HepG2 (cell line): ENCODE measurements at regions of chr11 and their contacts with region 1.

Region 1: DNA sequence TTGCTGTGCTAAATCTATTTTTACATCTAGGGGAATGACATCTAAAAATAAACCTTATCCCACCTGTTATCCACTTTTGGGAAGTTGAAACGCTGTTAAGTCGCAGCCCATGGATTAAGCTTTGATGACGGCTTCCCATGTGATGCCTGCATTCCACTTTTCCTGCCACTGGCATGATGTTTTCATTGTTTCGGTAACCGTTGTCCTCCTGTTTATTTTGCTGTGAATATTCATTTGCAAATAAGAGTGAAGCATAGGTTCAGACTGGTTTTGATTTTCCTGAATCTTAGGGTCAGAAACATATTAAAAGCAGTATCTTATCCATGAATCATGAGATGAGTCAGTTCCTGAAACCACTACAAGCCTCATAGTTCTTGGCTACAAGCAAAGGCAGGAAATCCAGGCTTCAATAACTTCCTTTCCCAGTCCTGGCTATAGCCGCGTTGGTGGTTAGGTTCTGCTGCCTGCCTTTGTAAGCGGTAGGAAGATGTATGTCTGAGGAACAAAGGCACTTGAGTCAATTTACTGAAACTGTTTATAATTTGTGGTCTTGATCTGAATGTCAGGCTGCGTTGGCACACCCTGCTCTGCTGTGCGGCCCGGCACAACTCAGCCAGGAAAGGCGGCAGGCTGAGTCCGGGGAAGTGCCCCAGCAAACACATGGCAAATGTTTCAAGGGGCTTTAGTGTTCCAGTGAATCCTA is 19.4 kb downstream of the TEAD1 start:
- DNase-seq: peak; percentile 48
- ATAC-seq: peak; percentile 47
- H3K4me3 ChIP-seq: peak overlapping the region; percentile 2 to 55 (median 6); a peak in 3 of 6 replicates
- H3K27ac ChIP-seq: peak overlapping the region; percentile 94
- H3K4me1 ChIP-seq: peaks cover 78% of the 10 kb centered on the region
- H3K27me3 ChIP-seq: no peaks in the 10 kb centered on the region
- CTCF ChIP-seq: no peak
- EP300 ChIP-seq: no peak
- POLR2A ChIP-seq: no peak
- RAD21 ChIP-seq: no peak

Region 2: GRCh38 chr11:12478743-12479142 is 214.9 kb before region 1 on chr11:
- CTCF ChIA-PET with region 1: no interaction called
- POLR2A ChIA-PET with region 1: no interaction called
- in situ Hi-C with region 1: no loop called
- intact Hi-C with region 1: no loop called
- DNase-seq: peak; percentile 19
- ATAC-seq: no peak
- H3K4me3 ChIP-seq: no peak overlapping the region
- H3K27ac ChIP-seq: no peak overlapping the region
- H3K4me1 ChIP-seq: peaks cover 7% of the 10 kb centered on the region; the same call in 1 of the 2 replicates
- H3K27me3 ChIP-seq: no peaks in the 10 kb centered on the region
- CTCF ChIP-seq: no peak
- EP300 ChIP-seq: no peak
- POLR2A ChIP-seq: no peak
- RAD21 ChIP-seq: no peak

Region 3: DNA sequence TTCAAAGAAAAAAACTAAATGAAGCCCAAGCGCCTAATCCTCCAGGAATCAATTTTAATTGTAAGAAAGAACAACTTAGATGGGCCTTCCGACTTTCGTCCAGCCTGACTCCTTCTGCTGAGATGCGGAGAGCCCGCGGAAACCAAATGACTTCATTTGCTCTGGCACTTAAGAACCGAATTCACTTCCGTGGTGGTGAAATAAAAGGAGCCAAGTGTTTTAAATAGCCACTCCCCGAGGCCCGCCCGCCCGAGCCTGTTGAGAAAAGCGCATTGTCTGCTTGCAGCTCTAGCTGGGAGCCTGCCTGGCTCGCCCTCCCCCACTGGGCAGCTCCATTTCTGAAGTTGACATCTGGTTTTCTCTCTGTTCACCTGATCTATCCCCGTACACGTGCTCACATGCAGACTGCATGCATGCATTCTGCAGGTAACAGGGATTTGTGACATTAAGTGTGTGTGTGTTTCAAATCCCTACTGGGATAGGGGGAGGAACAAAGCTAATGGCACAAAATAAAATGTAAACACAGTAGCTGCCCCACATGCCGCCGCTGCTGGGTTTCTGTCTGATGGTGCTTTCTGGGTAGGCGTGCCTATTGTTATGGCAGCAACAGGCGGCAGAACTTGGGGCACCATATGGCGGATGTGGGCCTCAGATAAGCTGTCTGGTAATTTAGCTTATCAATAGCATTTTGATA is 13.2 kb before region 1 on chr11:
- CTCF ChIA-PET with region 1: no interaction called
- POLR2A ChIA-PET with region 1: interaction called, 20 read pairs
- in situ Hi-C with region 1: no loop called
- intact Hi-C with region 1: loop called (anchors 2 kb)
- DNase-seq: peak; percentile 44
- ATAC-seq: peak; percentile 67
- H3K4me3 ChIP-seq: no peak overlapping the region
- H3K27ac ChIP-seq: no peak overlapping the region
- H3K4me1 ChIP-seq: peaks cover 93% of the 10 kb centered on the region
- H3K27me3 ChIP-seq: no peaks in the 10 kb centered on the region
- CTCF ChIP-seq: no peak
- EP300 ChIP-seq: no peak
- POLR2A ChIP-seq: no peak
- RAD21 ChIP-seq: no peak

Region 4: DNA sequence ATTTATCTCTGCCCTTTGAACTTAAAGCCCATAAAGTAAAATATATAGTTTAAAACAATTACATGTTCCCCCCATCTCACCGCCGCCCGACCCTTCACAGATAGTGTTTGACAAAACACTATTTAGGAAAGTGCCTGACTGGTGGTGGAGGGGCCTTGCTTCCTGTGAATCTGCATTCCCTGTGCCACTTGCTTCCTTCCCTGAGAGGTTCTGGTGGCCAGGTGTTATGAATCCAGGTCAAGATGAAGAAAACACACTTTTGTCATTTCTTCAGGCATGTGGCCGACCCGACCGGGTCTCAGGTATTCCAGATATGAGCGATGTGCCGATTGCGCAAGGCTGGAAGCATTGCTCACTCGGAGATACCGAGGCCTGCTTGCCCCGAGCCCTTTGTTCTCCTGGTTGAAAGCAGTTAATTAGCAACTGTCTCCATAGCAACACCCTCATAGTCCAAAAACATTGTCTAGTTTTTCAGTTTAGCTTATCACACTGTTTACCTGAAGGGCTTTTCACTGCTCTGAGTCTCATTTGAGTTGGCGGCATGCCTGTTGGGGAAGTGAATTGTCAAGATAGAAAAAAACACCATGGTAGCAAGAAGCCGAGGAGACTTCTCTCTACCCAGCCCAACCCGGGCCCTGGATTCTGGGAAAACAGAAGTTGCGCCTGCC is 108.9 kb after region 1 on chr11:
- CTCF ChIA-PET with region 1: no interaction called
- POLR2A ChIA-PET with region 1: no interaction called
- in situ Hi-C with region 1: no loop called
- intact Hi-C with region 1: loop called (anchors 1 kb)
- DNase-seq: peak; percentile 99
- ATAC-seq: peak; percentile 94
- H3K4me3 ChIP-seq: peak overlapping the region in 1 of 3 experiments; percentile 25; a peak in 2 of 6 replicates
- H3K27ac ChIP-seq: peak overlapping the region; percentile 96
- H3K4me1 ChIP-seq: peaks cover 94% of the 10 kb centered on the region
- H3K27me3 ChIP-seq: no peaks in the 10 kb centered on the region
- CTCF ChIP-seq: no peak
- EP300 ChIP-seq: peak; percentile 95 to 98
- POLR2A ChIP-seq: peak in 1 of 2 experiments; percentile 57; a peak in 1 of 4 replicates
- RAD21 ChIP-seq: peak; percentile 13; the same call in 1 of the 2 replicates

Region 5: DNA sequence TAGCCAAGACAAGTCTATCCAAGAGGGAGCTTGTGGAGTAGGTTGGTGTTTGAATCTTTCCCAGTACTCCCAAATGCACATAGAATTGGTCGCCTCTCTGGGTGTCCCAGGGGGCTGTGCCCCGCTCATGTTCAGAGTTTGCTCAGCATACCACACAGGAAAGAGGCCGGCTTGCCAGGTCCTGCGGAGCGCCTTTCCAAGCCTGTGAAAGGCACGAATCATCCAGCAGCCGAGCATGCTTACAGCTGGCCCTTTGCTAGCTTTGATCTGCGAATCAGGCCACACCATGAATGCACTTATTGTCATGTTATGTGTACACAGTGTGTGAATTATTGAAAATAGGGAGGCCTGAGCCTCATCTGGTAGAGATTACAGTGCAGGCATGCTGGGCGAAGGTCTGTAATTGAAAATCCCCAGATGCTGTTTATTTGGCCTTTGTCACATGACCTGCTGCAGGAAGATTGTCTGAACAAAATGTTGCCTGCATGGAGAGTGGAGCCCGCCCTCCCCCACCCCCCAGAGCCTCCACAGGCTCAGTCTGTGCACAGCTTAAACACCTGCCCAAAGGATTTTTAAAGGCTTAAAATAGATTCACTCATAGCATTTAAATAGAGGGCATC is 152.2 kb after region 1 on chr11:
- CTCF ChIA-PET with region 1: no interaction called
- POLR2A ChIA-PET with region 1: interaction called, 23 read pairs
- in situ Hi-C with region 1: no loop called
- intact Hi-C with region 1: no loop called
- DNase-seq: peak; percentile 98
- ATAC-seq: peak; percentile 97
- H3K4me3 ChIP-seq: peak overlapping the region; percentile 38 to 66 (median 51)
- H3K27ac ChIP-seq: peak overlapping the region; percentile 99
- H3K4me1 ChIP-seq: peaks cover 68% of the 10 kb centered on the region
- H3K27me3 ChIP-seq: no peaks in the 10 kb centered on the region
- CTCF ChIP-seq: no peak
- EP300 ChIP-seq: peak; percentile 85 to 90
- POLR2A ChIP-seq: peak; percentile 59 to 82; a peak in 3 of 4 replicates
- RAD21 ChIP-seq: no peak